Transverse colon (tissue), 4 donors: ENCODE measurements at regions of chr9 and their contacts with region 1.

Region 1: GRCh38 chr9:125268394-125269013 is 6.9 kb downstream of the GAPVD1 start:
- DNase-seq: no peak
- H3K4me3 ChIP-seq: no peak overlapping the region
- H3K27ac ChIP-seq: no peak overlapping the region
- H3K4me1 ChIP-seq: peaks cover 7 to 40% (median 23%) of the 10 kb centered on the region in 4 donors
- H3K27me3 ChIP-seq: no peaks in the 10 kb centered on the region
- CTCF ChIP-seq: no peak
- EP300 ChIP-seq: no peak
- POLR2A ChIP-seq: no peak

Region 2: GRCh38 chr9:125233678-125234077 is 34.8 kb before region 1 on chr9:
- in situ Hi-C with region 1: no loop called
- intact Hi-C with region 1: loop called (anchors 1 kb)
- DNase-seq: no peak
- H3K4me3 ChIP-seq: no peak overlapping the region
- H3K27ac ChIP-seq: peak overlapping the region; percentile 34 to 76 (median 64)
- H3K4me1 ChIP-seq: peaks cover 10 to 43% (median 33%) of the 10 kb centered on the region in 4 donors
- H3K27me3 ChIP-seq: no peaks in the 10 kb centered on the region
- CTCF ChIP-seq: no peak
- EP300 ChIP-seq: peak; percentile 45
- POLR2A ChIP-seq: no peak